ENCODE measurements at regions of chr15 and their contacts with region 1.

Region 1: GRCh38 chr15:84658080-84658787 is at the start of gene NMB:
- DNase-seq: peak; percentile 73
- H3K4me3 Mint-ChIP-seq: peak within 1 kb of the TSS; percentile 73
- H3K27ac Mint-ChIP-seq: peak within 1 kb of the TSS; percentile 56
- H3K4me1 Mint-ChIP-seq: peaks cover 26% of the 10 kb centered on the region
- H3K27me3 Mint-ChIP-seq: peaks cover 2% of the 10 kb centered on the region
- total RNA-seq, gene NMB: 3.0 and 3.5 TPM in 2 replicates

Region 2: GRCh38 chr15:84600851-84601838 is 57.1 kb before region 1 on chr15 and contains the start of gene ZSCAN2:
- intact Hi-C with region 1: loop called (anchors 1 kb)
- DNase-seq: peak; percentile 92
- H3K4me3 Mint-ChIP-seq: peak within 1 kb of the TSS; percentile 89
- H3K27ac Mint-ChIP-seq: peak within 1 kb of the TSS; percentile 72
- H3K4me1 Mint-ChIP-seq: peaks cover 59% of the 10 kb centered on the region
- H3K27me3 Mint-ChIP-seq: no peaks in the 10 kb centered on the region
- total RNA-seq, gene ZSCAN2: 6.5 and 7.0 TPM in 2 replicates

Region 3: GRCh38 chr15:84669726-84670125 is 11.5 kb after region 1 on chr15:
- intact Hi-C with region 1: loop called (anchors 1 kb)
- DNase-seq: no peak
- H3K4me3 Mint-ChIP-seq: peak overlapping the region; percentile 8
- H3K27ac Mint-ChIP-seq: peak overlapping the region; percentile 79
- H3K4me1 Mint-ChIP-seq: peaks cover 44% of the 10 kb centered on the region
- H3K27me3 Mint-ChIP-seq: no peaks in the 10 kb centered on the region

Region 4: GRCh38 chr15:84699538-84700191 is 41.4 kb after region 1 on chr15:
- intact Hi-C with region 1: no loop called
- DNase-seq: no peak
- H3K4me3 Mint-ChIP-seq: peak overlapping the region; percentile 37
- H3K27ac Mint-ChIP-seq: peak overlapping the region; percentile 73
- H3K4me1 Mint-ChIP-seq: peaks cover 55% of the 10 kb centered on the region
- H3K27me3 Mint-ChIP-seq: no peaks in the 10 kb centered on the region

Region 5: DNA sequence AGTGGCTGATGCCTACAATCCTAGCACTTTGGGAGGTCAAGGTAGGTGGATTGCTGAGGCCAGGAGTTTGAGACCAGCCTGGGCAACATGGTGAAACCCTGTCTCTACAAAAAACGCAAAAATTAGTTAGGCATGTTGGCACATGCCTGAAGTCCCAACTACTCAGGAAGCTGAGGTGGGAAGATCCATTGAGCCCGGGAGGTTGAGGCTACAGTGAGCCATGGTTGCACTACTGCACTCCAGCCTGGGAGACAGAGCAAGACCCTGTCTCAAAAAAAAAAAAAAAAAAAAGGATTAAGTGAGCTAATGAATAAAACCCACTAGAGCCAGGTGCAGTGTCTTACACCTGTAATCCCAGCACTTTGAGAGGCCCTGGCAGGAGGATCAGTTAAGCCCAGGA is 64.4 kb after region 1 on chr15:
- intact Hi-C with region 1: no loop called
- DNase-seq: no peak
- H3K4me3 Mint-ChIP-seq: no peak overlapping the region
- H3K27ac Mint-ChIP-seq: no peak overlapping the region
- H3K4me1 Mint-ChIP-seq: peaks cover 34% of the 10 kb centered on the region
- H3K27me3 Mint-ChIP-seq: no peaks in the 10 kb centered on the region

Region 6: GRCh38 chr15:84734794-84735479 is 76.7 kb after region 1 on chr15:
- intact Hi-C with region 1: loop called (anchors 1 kb)
- DNase-seq: peak; percentile 67
- H3K4me3 Mint-ChIP-seq: peak overlapping the region; percentile 74
- H3K27ac Mint-ChIP-seq: peak overlapping the region; percentile 93
- H3K4me1 Mint-ChIP-seq: peaks cover 48% of the 10 kb centered on the region
- H3K27me3 Mint-ChIP-seq: no peaks in the 10 kb centered on the region

Region 7: GRCh38 chr15:84761607-84762131 is 103.4 kb after region 1 on chr15:
- intact Hi-C with region 1: loop called (anchors 1 kb)
- DNase-seq: no peak
- H3K4me3 Mint-ChIP-seq: no peak overlapping the region
- H3K27ac Mint-ChIP-seq: no peak overlapping the region
- H3K4me1 Mint-ChIP-seq: peaks cover 27% of the 10 kb centered on the region
- H3K27me3 Mint-ChIP-seq: no peaks in the 10 kb centered on the region

Region 8: DNA sequence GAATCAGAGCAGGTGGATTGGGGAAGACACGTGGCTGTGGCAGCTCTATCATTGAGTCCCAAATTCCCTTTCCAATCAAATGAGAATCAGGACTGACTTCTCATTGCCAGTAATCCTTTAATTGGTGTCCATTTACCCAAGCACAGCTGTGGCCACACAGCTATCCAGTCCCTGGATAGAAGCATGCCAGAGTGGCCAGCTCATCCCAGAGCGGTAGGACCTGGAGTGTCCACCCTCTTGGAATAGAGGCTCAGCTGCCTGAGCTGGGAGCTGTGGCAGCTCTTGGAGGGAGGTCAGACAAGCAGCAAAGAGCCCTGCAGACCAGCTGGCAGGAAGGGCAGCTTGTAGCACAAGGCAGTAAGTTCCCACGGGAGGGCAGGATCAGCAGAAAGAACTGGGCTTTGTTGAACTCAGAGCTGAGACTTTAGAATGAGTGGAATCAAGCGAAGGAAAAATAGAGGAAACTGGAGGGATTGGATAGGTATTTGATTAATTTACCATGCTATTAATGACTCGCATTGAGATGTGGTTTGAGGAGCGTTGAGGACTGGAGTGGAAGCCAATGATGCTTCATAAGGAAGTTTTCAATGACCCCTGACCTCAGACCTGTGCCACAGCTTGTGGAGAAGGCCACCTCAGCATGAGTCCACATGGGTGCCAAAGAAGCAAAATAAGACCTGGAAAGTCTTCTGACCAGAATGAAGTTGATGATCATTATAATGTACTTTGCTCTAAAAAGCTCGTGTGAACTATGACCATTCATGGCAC is 152.0 kb after region 1 on chr15:
- intact Hi-C with region 1: no loop called
- DNase-seq: no peak
- H3K4me3 Mint-ChIP-seq: no peak overlapping the region
- H3K27ac Mint-ChIP-seq: no peak overlapping the region
- H3K4me1 Mint-ChIP-seq: no peaks in the 10 kb centered on the region
- H3K27me3 Mint-ChIP-seq: peaks cover 3% of the 10 kb centered on the region

Region 9: GRCh38 chr15:84871428-84872305 is 213.4 kb after region 1 on chr15:
- intact Hi-C with region 1: no loop called
- DNase-seq: no peak
- H3K4me3 Mint-ChIP-seq: no peak overlapping the region
- H3K27ac Mint-ChIP-seq: no peak overlapping the region
- H3K4me1 Mint-ChIP-seq: no peaks in the 10 kb centered on the region
- H3K27me3 Mint-ChIP-seq: peaks cover 7% of the 10 kb centered on the region

Region 10: GRCh38 chr15:84929744-84930371 is 271.6 kb after region 1 on chr15:
- intact Hi-C with region 1: loop called (anchors 1 kb)
- DNase-seq: no peak
- H3K4me3 Mint-ChIP-seq: no peak overlapping the region
- H3K27ac Mint-ChIP-seq: no peak overlapping the region
- H3K4me1 Mint-ChIP-seq: peaks cover 6% of the 10 kb centered on the region
- H3K27me3 Mint-ChIP-seq: no peaks in the 10 kb centered on the region

Measured in activated T-helper 1 cell treated with anti-CD3 and anti-CD28 coated beads, Interleukin-12 subunit alpha, Interleukin-12 subunit beta, Interleukin-2, Interleukin-4 antibody, amounts not matched to agents 30 ng/mL and 10 ng/mL and 1 ng/mL, durations not matched to agents 14 hours and 24 hours and 36 hours (primary cell).